ENCODE measurements at regions of chr5 and their contacts with region 1.

Region 1: GRCh38 chr5:172984243-172984953 is 827 bp downstream of the ATP6V0E1 start:
- DNase-seq: peak; percentile 43 to 92 (median 68)
- ATAC-seq: peak; percentile 92
- H3K4me3 ChIP-seq: peak overlapping the region; percentile 77
- H3K27ac ChIP-seq: peak overlapping the region; percentile 95
- H3K4me1 ChIP-seq: peaks cover 5 to 14% of the 10 kb centered on the region in 2 experiments; a peak in 3 of 5 replicates
- H3K27me3 ChIP-seq: no peaks in the 10 kb centered on the region
- CTCF ChIP-seq: peak; percentile 72 to 80 (median 74)
- EP300 ChIP-seq: peak; percentile 49
- POLR2A ChIP-seq: no peak
- RAD21 ChIP-seq: peak; percentile 63 to 75

Region 2: GRCh38 chr5:172973127-172973916 is 11.1 kb before region 1 on chr5:
- CTCF ChIA-PET with region 1: no interaction called
- POLR2A ChIA-PET with region 1: interaction called, 36 read pairs
- in situ Hi-C with region 1: no loop called
- intact Hi-C with region 1: no loop called
- DNase-seq: no peak
- ATAC-seq: no peak
- H3K4me3 ChIP-seq: no peak overlapping the region
- H3K27ac ChIP-seq: no peak overlapping the region
- H3K4me1 ChIP-seq: peaks cover 3 to 13% of the 10 kb centered on the region in 2 experiments; a peak in 3 of 5 replicates
- H3K27me3 ChIP-seq: 0 out of 5 replicates have a peak, but pooled peaks cover 0 to 2% of the 10 kb centered on the region in 2 experiments
- CTCF ChIP-seq: no peak
- EP300 ChIP-seq: no peak
- POLR2A ChIP-seq: no peak
- RAD21 ChIP-seq: no peak

Region 3: GRCh38 chr5:172994405-172994804 is 10.0 kb after region 1 on chr5:
- CTCF ChIA-PET with region 1: no interaction called
- POLR2A ChIA-PET with region 1: interaction called, 16 read pairs
- in situ Hi-C with region 1: no loop called
- intact Hi-C with region 1: no loop called
- DNase-seq: no peak
- ATAC-seq: no peak
- H3K4me3 ChIP-seq: no peak overlapping the region
- H3K27ac ChIP-seq: no peak overlapping the region
- H3K4me1 ChIP-seq: peaks cover 0 to 5% of the 10 kb centered on the region in 2 experiments; a peak in 1 of 5 replicates
- H3K27me3 ChIP-seq: no peaks in the 10 kb centered on the region
- CTCF ChIP-seq: no peak
- EP300 ChIP-seq: no peak
- POLR2A ChIP-seq: no peak
- RAD21 ChIP-seq: no peak

Region 4: DNA sequence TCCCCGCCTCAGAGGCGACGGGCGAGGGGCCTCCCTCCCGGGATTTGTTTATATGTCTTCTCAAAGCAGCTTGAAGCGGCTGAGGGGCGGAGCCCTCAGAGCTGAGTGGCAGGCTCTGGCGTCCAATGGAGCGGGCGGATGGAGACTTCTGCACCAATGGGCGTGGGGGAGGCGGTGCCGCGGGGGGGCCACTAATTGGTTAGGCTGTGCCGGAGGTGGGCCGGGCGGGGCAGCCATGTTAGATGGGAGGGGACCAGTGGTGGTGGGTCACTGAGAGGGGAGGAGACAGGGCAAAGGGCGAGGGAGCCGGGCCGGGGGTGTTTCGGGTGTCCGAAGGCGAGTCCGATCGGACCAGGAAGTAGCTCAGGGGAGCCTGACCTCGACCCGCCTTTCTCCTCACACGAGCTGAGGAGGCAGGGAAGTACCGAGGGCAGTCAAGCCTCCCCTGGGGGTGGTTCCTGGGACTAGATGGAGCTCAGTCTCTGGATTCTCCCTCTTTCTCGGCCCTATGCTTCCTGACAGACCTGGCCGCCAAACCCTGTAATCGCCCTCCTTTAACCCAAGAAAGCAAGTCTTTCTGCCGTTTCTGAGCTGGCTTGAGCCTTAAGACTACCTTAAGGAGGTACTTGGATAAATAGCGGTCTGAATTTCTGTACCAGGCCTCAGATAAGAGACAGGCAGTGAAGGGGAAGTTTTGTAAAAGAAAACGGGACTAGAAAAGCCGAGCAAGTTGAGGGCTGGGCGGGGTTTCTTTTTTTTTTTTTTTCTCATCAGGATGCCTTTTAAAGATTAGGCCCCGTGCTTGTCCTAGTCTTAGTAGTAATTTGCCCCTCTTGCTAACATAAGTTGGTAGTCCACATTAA is 72.9 kb after region 1 on chr5:
- CTCF ChIA-PET with region 1: no interaction called
- POLR2A ChIA-PET with region 1: interaction called, 7 read pairs
- in situ Hi-C with region 1: no loop called
- intact Hi-C with region 1: loop called (anchors 2 kb)
- DNase-seq: peak; percentile 98 to 99 (median 98)
- ATAC-seq: peak; percentile 95
- H3K4me3 ChIP-seq: peak overlapping the region; percentile 99
- H3K27ac ChIP-seq: peak overlapping the region; percentile 96
- H3K4me1 ChIP-seq: peaks cover 10% of the 10 kb centered on the region in 2 experiments; a peak in 3 of 5 replicates
- H3K27me3 ChIP-seq: no peaks in the 10 kb centered on the region
- CTCF ChIP-seq: peak in 1 of 3 experiments; percentile 2; a peak in 1 of 6 replicates
- EP300 ChIP-seq: no peak; the same call in 1 of the 2 replicates
- POLR2A ChIP-seq: peak; percentile 77
- RAD21 ChIP-seq: peak in 1 of 2 experiments; percentile 22; a peak in 2 of 4 replicates

Region 5: DNA sequence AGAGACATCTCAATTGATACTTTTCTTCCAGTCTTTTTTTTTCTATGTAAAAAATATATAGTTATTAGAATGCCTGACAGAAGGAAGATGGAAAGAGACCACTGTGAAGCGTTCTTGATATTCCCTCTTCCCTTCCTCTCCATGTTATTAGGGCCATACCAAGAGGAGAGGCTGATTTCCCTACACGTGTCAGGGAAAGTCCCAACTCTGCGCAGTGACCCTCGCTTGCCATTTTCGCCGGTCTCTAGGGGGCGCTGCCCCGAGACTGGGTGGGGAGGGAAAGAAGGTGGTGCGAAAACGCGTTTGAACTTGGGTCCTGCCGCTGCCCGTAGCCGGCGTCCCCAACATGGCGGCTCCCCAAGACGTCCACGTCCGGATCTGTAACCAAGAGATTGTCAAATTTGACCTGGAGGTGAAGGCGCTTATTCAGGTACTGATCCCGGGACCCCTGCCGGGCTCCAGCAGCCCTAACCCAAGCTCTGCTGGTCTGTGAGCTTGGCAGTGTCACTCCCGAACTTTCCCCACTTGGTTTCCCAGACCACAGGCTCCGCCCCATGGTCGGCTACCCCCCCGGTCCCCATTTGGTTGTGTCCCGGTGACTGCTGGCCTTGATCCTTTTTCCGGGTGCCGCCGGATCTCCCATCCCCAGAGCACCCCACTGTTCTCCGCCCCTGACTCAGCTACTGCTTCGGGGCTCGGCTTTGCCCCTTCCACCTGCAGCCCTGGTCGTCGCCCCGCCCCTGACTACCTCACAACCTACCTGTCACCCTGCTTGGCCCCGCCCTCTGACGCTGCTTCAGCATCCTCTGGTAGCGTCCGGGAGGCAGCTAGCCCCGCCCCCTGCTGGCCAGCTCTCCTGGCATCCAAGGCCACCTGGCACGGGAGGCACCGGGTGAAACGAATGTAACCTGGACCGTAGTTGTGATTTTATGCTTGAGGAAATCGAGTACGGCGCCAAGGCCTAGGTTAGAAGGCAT is 160.1 kb after region 1 on chr5 and contains the start of gene BNIP1:
- CTCF ChIA-PET with region 1: interaction called, 5 read pairs
- POLR2A ChIA-PET with region 1: no interaction called
- in situ Hi-C with region 1: no loop called
- intact Hi-C with region 1: loop called (anchors 1 kb)
- DNase-seq: peak; percentile 93 to 96 (median 96)
- ATAC-seq: peak; percentile 97
- H3K4me3 ChIP-seq: peak within 1 kb of the TSS; percentile 66
- H3K27ac ChIP-seq: peak within 1 kb of the TSS; percentile 84
- H3K4me1 ChIP-seq: peaks cover 7 to 12% of the 10 kb centered on the region in 2 experiments; a peak in 3 of 5 replicates
- H3K27me3 ChIP-seq: no peaks in the 10 kb centered on the region
- CTCF ChIP-seq: peak; percentile 88 to 96 (median 95)
- EP300 ChIP-seq: peak; percentile 39; the same call in 1 of the 2 replicates
- POLR2A ChIP-seq: peak; percentile 87
- RAD21 ChIP-seq: peak; percentile 41 to 62
- polyA plus RNA-seq, gene BNIP1: 54.9 to 65.0 TPM

Region 6: DNA sequence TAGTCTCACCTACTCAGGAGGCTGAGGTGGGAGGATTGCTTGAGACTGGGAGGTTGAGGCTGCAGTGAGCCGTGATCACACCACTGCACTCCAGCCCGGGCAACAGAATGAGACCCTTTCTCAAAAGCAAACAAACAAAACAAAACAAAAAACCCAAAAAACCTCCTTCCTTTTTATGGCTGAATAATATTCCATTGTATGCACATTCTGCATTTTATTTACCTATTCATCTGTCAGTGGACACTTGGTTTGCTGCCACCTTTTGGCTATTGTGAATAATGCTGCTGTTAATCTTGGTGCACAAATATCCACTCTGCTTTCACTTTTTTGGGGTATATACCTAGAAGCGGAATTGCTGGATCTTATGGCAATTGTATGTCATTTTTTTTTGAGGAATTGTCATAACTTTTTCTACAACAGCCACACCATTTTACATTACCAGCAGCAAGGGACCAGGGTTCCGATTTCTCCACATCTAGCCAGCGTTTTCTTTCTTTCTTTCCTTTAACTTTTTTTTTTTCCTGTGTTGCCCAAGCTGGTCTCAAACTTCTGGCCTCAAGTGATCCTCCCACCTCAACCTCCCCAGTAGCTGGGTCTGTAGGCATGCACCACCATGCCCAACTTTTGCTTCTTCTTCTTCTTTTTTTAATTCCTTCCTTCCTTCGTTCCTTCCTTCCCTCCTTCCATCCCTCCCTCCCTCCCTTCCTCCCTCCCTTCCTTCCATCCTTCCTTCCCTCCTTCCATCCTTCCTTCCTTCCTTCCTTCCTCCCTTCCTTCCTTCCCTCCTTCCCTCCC is 220.0 kb after region 1 on chr5:
- CTCF ChIA-PET with region 1: interaction called, 8 read pairs
- POLR2A ChIA-PET with region 1: no interaction called
- in situ Hi-C with region 1: no loop called
- intact Hi-C with region 1: loop called (anchors 2 kb)
- DNase-seq: peak in 1 of 4 experiments; percentile 51
- ATAC-seq: peak; percentile 66
- H3K4me3 ChIP-seq: no peak overlapping the region
- H3K27ac ChIP-seq: no peak overlapping the region
- H3K4me1 ChIP-seq: no peaks in the 10 kb centered on the region
- H3K27me3 ChIP-seq: peaks cover 24 to 57% of the 10 kb centered on the region in 2 experiments; a peak in 4 of 5 replicates
- CTCF ChIP-seq: peak; percentile 62 to 76 (median 70)
- EP300 ChIP-seq: no peak
- POLR2A ChIP-seq: no peak
- RAD21 ChIP-seq: peak; percentile 55 to 71; a peak in 3 of 4 replicates

Region 7: DNA sequence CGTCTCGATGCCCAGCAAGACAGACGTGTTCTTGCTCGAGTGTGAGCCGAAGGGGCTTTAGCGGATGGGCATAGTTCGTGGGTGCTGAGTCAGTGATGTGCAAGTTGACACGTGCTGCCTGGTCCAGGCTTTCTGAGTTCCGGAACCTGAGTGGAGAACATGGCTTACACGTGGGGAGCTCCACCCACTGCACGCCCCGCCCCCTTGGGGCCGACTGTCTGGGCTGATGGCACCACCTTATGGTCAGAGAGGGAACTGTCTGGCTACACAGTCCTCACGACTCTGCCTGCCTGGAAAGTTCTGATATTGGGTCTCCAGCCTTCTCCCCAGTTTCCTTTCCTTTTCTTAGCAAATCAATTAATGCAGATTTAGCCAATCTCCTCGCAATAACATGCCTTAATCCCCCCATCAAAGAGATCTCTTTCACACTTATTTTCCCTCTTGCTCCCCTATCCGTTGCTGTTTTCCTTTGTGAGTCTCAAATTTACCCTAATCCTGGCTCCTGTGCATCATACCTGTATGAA is 347.6 kb after region 1 on chr5:
- CTCF ChIA-PET with region 1: no interaction called
- POLR2A ChIA-PET with region 1: interaction called, 3 read pairs
- in situ Hi-C with region 1: no loop called
- intact Hi-C with region 1: loop called (anchors 5 kb)
- DNase-seq: peak; percentile 93 to 95 (median 94)
- ATAC-seq: peak; percentile 78
- H3K4me3 ChIP-seq: no peak overlapping the region
- H3K27ac ChIP-seq: no peak overlapping the region
- H3K4me1 ChIP-seq: peaks cover 4 to 25% of the 10 kb centered on the region in 2 experiments; a peak in 3 of 5 replicates
- H3K27me3 ChIP-seq: 0 out of 5 replicates have a peak, but pooled peaks cover 0 to 5% of the 10 kb centered on the region in 2 experiments
- CTCF ChIP-seq: peak; percentile 95 to 98 (median 97)
- EP300 ChIP-seq: no peak
- POLR2A ChIP-seq: no peak
- RAD21 ChIP-seq: peak; percentile 99

Region 8: DNA sequence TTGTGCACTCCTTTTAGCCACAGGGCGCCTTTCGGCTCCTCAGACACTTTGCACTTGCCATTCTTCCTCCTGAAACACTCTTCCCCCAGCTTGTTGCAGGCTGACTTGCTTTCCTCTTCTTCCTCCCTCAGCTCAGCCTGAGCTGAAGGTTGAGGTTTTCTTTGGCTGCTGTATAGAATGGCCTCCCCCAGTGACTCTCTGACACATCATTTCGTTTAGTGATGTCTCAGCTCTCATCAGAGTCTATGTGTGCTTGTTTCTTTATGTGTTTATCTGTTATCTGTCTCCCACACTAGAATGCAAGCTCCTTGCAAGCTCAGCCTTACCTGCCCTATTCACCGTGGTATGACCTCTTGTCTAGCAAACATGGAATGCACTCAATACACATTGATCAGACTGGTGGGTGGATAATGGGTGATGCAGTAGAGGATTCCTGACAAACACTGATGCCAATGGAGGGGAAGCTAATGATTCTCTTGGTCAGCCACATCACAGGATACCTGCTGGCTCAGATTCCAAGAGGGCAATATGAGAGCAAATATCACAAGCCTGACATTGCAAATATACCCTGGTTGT is 456.7 kb after region 1 on chr5:
- CTCF ChIA-PET with region 1: no interaction called
- POLR2A ChIA-PET with region 1: no interaction called
- in situ Hi-C with region 1: no loop called
- intact Hi-C with region 1: no loop called
- DNase-seq: no peak
- ATAC-seq: no peak
- H3K4me3 ChIP-seq: no peak overlapping the region
- H3K27ac ChIP-seq: no peak overlapping the region
- H3K4me1 ChIP-seq: no peaks in the 10 kb centered on the region
- H3K27me3 ChIP-seq: peaks cover 3 to 28% of the 10 kb centered on the region in 2 experiments; a peak in 4 of 5 replicates
- CTCF ChIP-seq: no peak
- EP300 ChIP-seq: no peak
- POLR2A ChIP-seq: no peak
- RAD21 ChIP-seq: no peak

Measured in K562 (cell line).